Activated CD8-positive, alpha-beta memory T cell treated with anti-CD3 and anti-CD28 coated beads, Interleukin-2, amount 10 ng/mL, durations not matched to agents 7 days and 5 days (primary cell): ENCODE measurements at regions of chr6 and their contacts with region 1.

Region 1: GRCh38 chr6:90425161-90425641 is 128.6 kb upstream of the BACH2 start:
- DNase-seq: peak; percentile 75
- ATAC-seq: peak; percentile 95
- H3K4me3 Mint-ChIP-seq: peak overlapping the region; percentile 73
- H3K27ac Mint-ChIP-seq: peak overlapping the region; percentile 99
- H3K4me1 Mint-ChIP-seq: peaks cover 27% of the 10 kb centered on the region
- H3K27me3 Mint-ChIP-seq: no peaks in the 10 kb centered on the region

Region 2: GRCh38 chr6:90274451-90275030 is 150.7 kb before region 1 on chr6:
- CTCF ChIA-PET with region 1: no interaction called
- DNase-seq: peak; percentile 91
- ATAC-seq: peak; percentile 90
- H3K4me3 Mint-ChIP-seq: peak overlapping the region; percentile 46
- H3K27ac Mint-ChIP-seq: peak overlapping the region; percentile 85
- H3K4me1 Mint-ChIP-seq: peaks cover 58% of the 10 kb centered on the region
- H3K27me3 Mint-ChIP-seq: peaks cover 5% of the 10 kb centered on the region

Region 3: GRCh38 chr6:90413867-90414266 is 11.3 kb before region 1 on chr6:
- CTCF ChIA-PET with region 1: interaction called, 82 read pairs
- DNase-seq: peak; percentile 93
- ATAC-seq: peak; percentile 85
- H3K4me3 Mint-ChIP-seq: peak overlapping the region; percentile 72
- H3K27ac Mint-ChIP-seq: peak overlapping the region; percentile 97
- H3K4me1 Mint-ChIP-seq: peaks cover 83% of the 10 kb centered on the region
- H3K27me3 Mint-ChIP-seq: peaks cover 3% of the 10 kb centered on the region

Region 4: GRCh38 chr6:90458353-90459224 is 33.4 kb after region 1 on chr6:
- CTCF ChIA-PET with region 1: interaction called, 10 read pairs
- DNase-seq: peak; percentile 91
- ATAC-seq: peak; percentile 91
- H3K4me3 Mint-ChIP-seq: peak overlapping the region; percentile 65
- H3K27ac Mint-ChIP-seq: peak overlapping the region; percentile 93
- H3K4me1 Mint-ChIP-seq: peaks cover 70% of the 10 kb centered on the region
- H3K27me3 Mint-ChIP-seq: no peaks in the 10 kb centered on the region

Region 5: DNA sequence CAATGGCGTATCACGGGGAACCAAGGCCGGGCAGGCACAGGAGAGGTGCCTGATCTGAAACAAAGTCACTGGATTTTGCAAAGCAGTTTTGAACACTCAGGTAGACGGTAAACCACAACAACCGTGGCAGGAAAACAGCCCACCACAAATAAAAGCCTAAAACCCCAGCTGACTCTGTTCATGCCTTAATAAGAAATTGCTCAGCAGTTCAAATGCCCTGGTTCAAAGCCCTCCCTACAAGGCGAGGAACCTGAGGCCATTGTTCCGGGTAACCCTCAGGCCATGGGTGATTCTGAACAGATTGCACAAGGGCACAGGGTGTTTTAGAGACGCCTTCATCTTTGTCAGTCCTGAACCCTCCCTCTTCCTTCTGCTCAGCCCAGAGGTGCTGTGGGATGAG is 47.5 kb after region 1 on chr6:
- CTCF ChIA-PET with region 1: interaction called, 40 read pairs
- DNase-seq: peak; percentile 86
- ATAC-seq: peak; percentile 42
- H3K4me3 Mint-ChIP-seq: peak overlapping the region; percentile 70
- H3K27ac Mint-ChIP-seq: peak overlapping the region; percentile 88
- H3K4me1 Mint-ChIP-seq: peaks cover 90% of the 10 kb centered on the region
- H3K27me3 Mint-ChIP-seq: peaks cover 6% of the 10 kb centered on the region

Region 6: GRCh38 chr6:90493332-90493731 is 68.1 kb after region 1 on chr6:
- CTCF ChIA-PET with region 1: no interaction called
- DNase-seq: no peak
- ATAC-seq: no peak
- H3K4me3 Mint-ChIP-seq: no peak overlapping the region
- H3K27ac Mint-ChIP-seq: no peak overlapping the region
- H3K4me1 Mint-ChIP-seq: peaks cover 7% of the 10 kb centered on the region
- H3K27me3 Mint-ChIP-seq: peaks cover 39% of the 10 kb centered on the region

Region 7: GRCh38 chr6:90663863-90664262 is 238.7 kb after region 1 on chr6:
- CTCF ChIA-PET with region 1: no interaction called
- DNase-seq: no peak
- ATAC-seq: no peak
- H3K4me3 Mint-ChIP-seq: no peak overlapping the region
- H3K27ac Mint-ChIP-seq: no peak overlapping the region
- H3K4me1 Mint-ChIP-seq: no peaks in the 10 kb centered on the region
- H3K27me3 Mint-ChIP-seq: peaks cover 6% of the 10 kb centered on the region